A549 (cell line): ENCODE measurements at regions of chr2 and their contacts with region 1.

Region 1: GRCh38 chr2:190781604-190782198 is 98.9 kb upstream of the GLS start:
- DNase-seq: peak; percentile 65 to 74
- ATAC-seq: peak; percentile 75 to 91; a peak in 4 of 6 replicates
- H3K4me3 ChIP-seq: no peak overlapping the region
- H3K27ac ChIP-seq: peak overlapping the region; percentile 53 to 66
- H3K4me1 ChIP-seq: peaks cover 26% of the 10 kb centered on the region
- CTCF ChIP-seq: peak; percentile 90
- EP300 ChIP-seq: no peak
- POLR2A ChIP-seq: no peak
- RAD21 ChIP-seq: peak; percentile 87 to 97

Region 2: GRCh38 chr2:190649798-190650390 is 131.8 kb before region 1 on chr2:
- CTCF ChIA-PET with region 1: no interaction called
- POLR2A ChIA-PET with region 1: no interaction called
- DNase-seq: peak; percentile 13 to 46
- ATAC-seq: peak in 1 of 2 experiments; percentile 19; a peak in 3 of 6 replicates
- H3K4me3 ChIP-seq: peak overlapping the region; percentile 87
- H3K27ac ChIP-seq: peak overlapping the region; percentile 91 to 99
- H3K4me1 ChIP-seq: peaks cover 64% of the 10 kb centered on the region
- CTCF ChIP-seq: no peak
- EP300 ChIP-seq: no peak
- POLR2A ChIP-seq: no peak
- RAD21 ChIP-seq: no peak

Region 3: GRCh38 chr2:190763901-190764514 is 17.7 kb before region 1 on chr2:
- CTCF ChIA-PET with region 1: interaction called, 16 read pairs
- POLR2A ChIA-PET with region 1: no interaction called
- DNase-seq: no peak
- ATAC-seq: no peak
- H3K4me3 ChIP-seq: no peak overlapping the region
- H3K27ac ChIP-seq: no peak overlapping the region
- H3K4me1 ChIP-seq: peaks cover 41% of the 10 kb centered on the region
- CTCF ChIP-seq: no peak
- EP300 ChIP-seq: no peak
- POLR2A ChIP-seq: no peak
- RAD21 ChIP-seq: no peak

Region 4: GRCh38 chr2:190804182-190804795 is 22.6 kb after region 1 on chr2:
- CTCF ChIA-PET with region 1: interaction called, 16 read pairs
- POLR2A ChIA-PET with region 1: no interaction called
- DNase-seq: peak in 1 of 2 experiments; percentile 27
- ATAC-seq: peak in 1 of 2 experiments; percentile 55; a peak in 3 of 6 replicates
- H3K4me3 ChIP-seq: no peak overlapping the region
- H3K27ac ChIP-seq: peak overlapping the region; percentile 38 to 59; a peak in 5 of 6 replicates
- H3K4me1 ChIP-seq: peaks cover 32% of the 10 kb centered on the region
- CTCF ChIP-seq: peak; percentile 78
- EP300 ChIP-seq: no peak
- POLR2A ChIP-seq: no peak
- RAD21 ChIP-seq: peak; percentile 69 to 85

Region 5: DNA sequence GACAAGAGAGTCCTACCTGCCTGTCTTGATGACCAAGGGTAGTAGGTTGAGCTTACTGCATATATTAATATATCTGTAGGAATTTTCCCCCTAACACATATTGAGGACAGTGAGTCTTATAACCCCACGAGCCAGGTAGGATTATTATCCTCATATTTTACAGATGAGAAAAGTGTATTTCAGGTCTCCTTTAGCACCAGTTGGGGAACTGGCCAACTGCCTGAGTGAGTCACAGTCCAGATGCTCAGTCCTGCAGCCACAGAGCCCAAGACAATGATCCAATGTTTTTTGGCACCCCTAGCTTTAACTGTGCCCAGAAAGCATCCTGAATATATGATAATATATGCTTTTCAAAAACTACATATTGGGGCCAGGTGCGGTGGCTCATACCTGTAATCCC is 68.1 kb after region 1 on chr2:
- CTCF ChIA-PET with region 1: interaction called, 10 read pairs
- POLR2A ChIA-PET with region 1: no interaction called
- DNase-seq: peak in 1 of 2 experiments; percentile 26
- ATAC-seq: peak in 1 of 2 experiments; percentile 29; a peak in 3 of 6 replicates
- H3K4me3 ChIP-seq: no peak overlapping the region
- H3K27ac ChIP-seq: peak overlapping the region; percentile 58 to 78
- H3K4me1 ChIP-seq: peaks cover 54% of the 10 kb centered on the region
- CTCF ChIP-seq: no peak
- EP300 ChIP-seq: no peak
- POLR2A ChIP-seq: no peak
- RAD21 ChIP-seq: no peak

Region 6: GRCh38 chr2:190947711-190948251 is 166.1 kb after region 1 on chr2:
- CTCF ChIA-PET with region 1: interaction called, 19 read pairs
- POLR2A ChIA-PET with region 1: interaction called, 3 read pairs
- DNase-seq: peak; percentile 8 to 75
- ATAC-seq: peak; percentile 42 to 77; a peak in 4 of 6 replicates
- H3K4me3 ChIP-seq: 0 out of 3 replicates have a peak overlapping the region, but pooled peaks have one; percentile 0
- H3K27ac ChIP-seq: peak overlapping the region; percentile 50 to 73; a peak in 5 of 6 replicates
- H3K4me1 ChIP-seq: peaks cover 54% of the 10 kb centered on the region
- CTCF ChIP-seq: peak; percentile 36; the same call in 2 of the 3 replicates
- EP300 ChIP-seq: no peak
- POLR2A ChIP-seq: no peak
- RAD21 ChIP-seq: peak in 1 of 2 experiments; percentile 45; a peak in 4 of 5 replicates